Mammary epithelial cell (primary cell): ENCODE measurements at regions of chr19 and their contacts with region 1.

Region 1: DNA sequence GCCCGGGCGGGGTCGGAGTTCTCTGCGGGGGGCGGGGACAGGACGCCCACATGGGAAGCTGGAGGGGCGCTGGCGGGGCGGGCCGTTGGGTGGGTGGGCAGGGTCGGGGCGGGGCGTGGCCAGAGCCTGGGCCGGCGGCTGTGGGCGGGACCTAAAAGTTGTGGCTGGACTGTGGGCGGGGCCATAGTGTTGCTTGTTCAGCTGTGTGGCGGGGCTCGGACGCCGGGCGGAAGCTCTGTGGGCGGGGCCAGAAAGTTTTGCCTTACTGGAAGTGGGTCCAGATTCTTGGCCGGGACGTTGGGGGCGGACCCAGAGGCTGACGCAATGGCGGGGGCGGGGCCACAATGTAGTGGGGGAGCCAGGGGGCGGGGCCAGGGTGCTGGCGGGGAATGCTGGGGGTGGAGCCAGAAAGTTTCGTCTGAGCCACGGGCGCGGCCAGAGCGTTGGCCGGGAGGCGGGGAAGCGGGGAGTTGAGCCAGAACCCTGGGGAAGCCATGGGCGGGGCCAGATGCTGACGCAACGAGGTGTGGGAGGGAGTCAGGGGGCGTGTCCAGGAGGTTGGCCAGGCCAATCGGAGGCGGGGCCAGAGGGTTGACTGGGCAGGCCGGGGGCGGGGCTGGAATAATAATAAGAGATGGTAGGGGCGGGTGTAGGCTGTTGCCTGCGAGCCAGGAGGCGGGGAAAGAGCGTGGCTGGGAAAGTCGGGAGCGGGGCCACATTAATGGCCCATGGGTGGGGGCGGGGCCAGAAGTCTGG is 541 bp downstream of the CCDC9 start:
- DNase-seq: peak; percentile 97
- H3K4me3 ChIP-seq: peak overlapping the region in 2 of 3 experiments; percentile 60 to 81
- H3K27ac ChIP-seq: peak overlapping the region; percentile 92
- H3K4me1 ChIP-seq: peaks cover 21% of the 10 kb centered on the region
- H3K27me3 ChIP-seq: no peaks in the 10 kb centered on the region
- CTCF ChIP-seq: no peak

Region 2: GRCh38 chr19:47176627-47177090 is 80.2 kb before region 1 on chr19:
- CTCF ChIA-PET with region 1: interaction called, 25 read pairs
- dilution Hi-C with region 1: no loop called
- in situ Hi-C with region 1: no loop called
- intact Hi-C with region 1: no loop called
- DNase-seq: peak; percentile 74
- H3K4me3 ChIP-seq: no peak overlapping the region
- H3K27ac ChIP-seq: no peak overlapping the region
- H3K4me1 ChIP-seq: peaks cover 7% of the 10 kb centered on the region
- H3K27me3 ChIP-seq: no peaks in the 10 kb centered on the region
- CTCF ChIP-seq: no peak

Region 3: GRCh38 chr19:47203254-47203653 is 53.6 kb before region 1 on chr19:
- CTCF ChIA-PET with region 1: no interaction called
- dilution Hi-C with region 1: no loop called
- in situ Hi-C with region 1: no loop called
- intact Hi-C with region 1: no loop called
- DNase-seq: no peak
- H3K4me3 ChIP-seq: no peak overlapping the region
- H3K27ac ChIP-seq: no peak overlapping the region
- H3K4me1 ChIP-seq: no peaks in the 10 kb centered on the region
- H3K27me3 ChIP-seq: no peaks in the 10 kb centered on the region
- CTCF ChIP-seq: no peak

Region 4: GRCh38 chr19:47232422-47233211 is 24.2 kb before region 1 on chr19:
- CTCF ChIA-PET with region 1: no interaction called
- dilution Hi-C with region 1: no loop called
- in situ Hi-C with region 1: no loop called
- intact Hi-C with region 1: loop called (anchors 1 kb)
- DNase-seq: peak; percentile 92
- H3K4me3 ChIP-seq: peak overlapping the region; percentile 43 to 56 (median 53)
- H3K27ac ChIP-seq: peak overlapping the region; percentile 90
- H3K4me1 ChIP-seq: peaks cover 43% of the 10 kb centered on the region
- H3K27me3 ChIP-seq: no peaks in the 10 kb centered on the region
- CTCF ChIP-seq: no peak

Region 5: GRCh38 chr19:47273313-47273977 is 16.6 kb after region 1 on chr19:
- CTCF ChIA-PET with region 1: no interaction called
- dilution Hi-C with region 1: no loop called
- in situ Hi-C with region 1: no loop called
- intact Hi-C with region 1: loop called (anchors 1 kb)
- DNase-seq: peak; percentile 85
- H3K4me3 ChIP-seq: peak overlapping the region; percentile 58 to 81 (median 73)
- H3K27ac ChIP-seq: peak overlapping the region; percentile 89
- H3K4me1 ChIP-seq: peaks cover 14% of the 10 kb centered on the region
- H3K27me3 ChIP-seq: no peaks in the 10 kb centered on the region
- CTCF ChIP-seq: no peak

Region 6: DNA sequence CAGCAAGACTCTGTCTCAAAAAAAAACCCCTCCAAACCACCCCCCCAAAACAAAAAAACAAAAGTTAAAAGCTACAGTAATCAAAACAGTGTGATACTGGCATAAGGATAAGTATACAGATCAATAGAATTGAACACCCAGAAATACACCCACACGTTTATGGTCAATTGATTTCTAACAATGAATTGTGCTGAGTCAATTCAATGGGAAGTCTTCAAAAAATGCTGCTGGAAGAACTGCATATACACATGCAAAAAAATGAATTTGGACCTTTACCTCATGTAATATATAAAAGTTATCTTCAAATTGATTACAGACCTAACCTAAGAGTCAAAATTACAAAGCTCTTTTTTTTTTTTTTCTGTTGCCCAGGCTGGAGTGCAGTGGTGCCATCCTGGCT is 277.8 kb after region 1 on chr19:
- CTCF ChIA-PET with region 1: interaction called, 41 read pairs
- dilution Hi-C with region 1: no loop called
- in situ Hi-C with region 1: no loop called
- intact Hi-C with region 1: no loop called
- DNase-seq: no peak
- H3K4me3 ChIP-seq: no peak overlapping the region
- H3K27ac ChIP-seq: no peak overlapping the region
- H3K4me1 ChIP-seq: no peaks in the 10 kb centered on the region
- H3K27me3 ChIP-seq: no peaks in the 10 kb centered on the region
- CTCF ChIP-seq: no peak

Region 7: GRCh38 chr19:47545061-47545948 is 288.4 kb after region 1 on chr19:
- CTCF ChIA-PET with region 1: no interaction called
- dilution Hi-C with region 1: no loop called
- in situ Hi-C with region 1: no loop called
- intact Hi-C with region 1: no loop called
- DNase-seq: no peak
- H3K4me3 ChIP-seq: no peak overlapping the region
- H3K27ac ChIP-seq: no peak overlapping the region
- H3K4me1 ChIP-seq: no peaks in the 10 kb centered on the region
- H3K27me3 ChIP-seq: no peaks in the 10 kb centered on the region
- CTCF ChIP-seq: no peak